ENCODE measurements at regions of chr6 and their contacts with region 1.

Region 1: GRCh38 chr6:152124429-152125074 is 317.1 kb downstream of the ESR1 start:
- DNase-seq: no peak
- H3K4me3 ChIP-seq: no peak overlapping the region
- H3K27ac ChIP-seq: no peak overlapping the region
- H3K4me1 ChIP-seq: no peaks in the 10 kb centered on the region
- H3K27me3 ChIP-seq: no peaks in the 10 kb centered on the region
- CTCF ChIP-seq: peak in 2 of 3 experiments; percentile 38 to 59; a peak in 2 of 4 replicates
- EP300 ChIP-seq: no peak
- POLR2A ChIP-seq: no peak
- RAD21 ChIP-seq: peak; percentile 73 to 81

Region 2: DNA sequence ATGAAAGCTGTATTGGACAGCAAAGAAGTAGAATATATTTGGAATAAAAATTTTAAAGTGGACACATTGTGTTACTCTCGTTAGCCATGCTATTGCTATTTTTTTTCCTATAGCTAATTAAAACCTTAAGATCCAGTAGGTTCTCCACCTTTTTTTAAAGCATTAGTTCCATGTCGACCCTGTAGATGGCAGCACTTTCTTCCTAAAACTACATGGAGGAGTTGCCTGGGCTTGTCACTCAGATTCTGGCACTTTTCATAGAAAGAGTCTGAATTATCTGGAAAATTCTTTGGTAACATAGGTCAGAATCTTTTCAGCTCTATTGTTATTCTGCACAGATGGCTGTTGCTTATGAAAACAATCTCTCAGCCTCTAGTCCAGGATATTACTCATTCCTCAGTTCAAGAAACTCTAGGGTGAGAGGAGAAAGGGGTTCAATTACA is 359.1 kb before region 1 on chr6:
- CTCF ChIA-PET with region 1: interaction called, 31 read pairs
- POLR2A ChIA-PET with region 1: no interaction called
- DNase-seq: no peak
- H3K4me3 ChIP-seq: no peak overlapping the region
- H3K27ac ChIP-seq: no peak overlapping the region
- H3K4me1 ChIP-seq: peaks cover 0 to 9% (median 2%) of the 10 kb centered on the region in 4 experiments; a peak in 3 of 7 replicates
- H3K27me3 ChIP-seq: peaks cover 0 to 1% (median 0%) of the 10 kb centered on the region in 4 experiments; a peak in 1 of 7 replicates
- CTCF ChIP-seq: peak in 2 of 3 experiments; percentile 58 to 62; a peak in 3 of 4 replicates
- EP300 ChIP-seq: no peak
- POLR2A ChIP-seq: no peak
- RAD21 ChIP-seq: peak; percentile 79

Region 3: GRCh38 chr6:151822260-151823111 is 302.1 kb before region 1 on chr6:
- CTCF ChIA-PET with region 1: no interaction called
- POLR2A ChIA-PET with region 1: no interaction called
- DNase-seq: no peak
- H3K4me3 ChIP-seq: no peak overlapping the region
- H3K27ac ChIP-seq: no peak overlapping the region
- H3K4me1 ChIP-seq: no peaks in the 10 kb centered on the region
- H3K27me3 ChIP-seq: no peaks in the 10 kb centered on the region
- CTCF ChIP-seq: no peak
- EP300 ChIP-seq: no peak
- POLR2A ChIP-seq: no peak
- RAD21 ChIP-seq: no peak

Region 4: GRCh38 chr6:152100183-152100618 is 24.4 kb before region 1 on chr6:
- CTCF ChIA-PET with region 1: interaction called, 29 read pairs
- POLR2A ChIA-PET with region 1: no interaction called
- DNase-seq: no peak
- H3K4me3 ChIP-seq: no peak overlapping the region
- H3K27ac ChIP-seq: no peak overlapping the region
- H3K4me1 ChIP-seq: peaks cover 0 to 3% (median 0%) of the 10 kb centered on the region in 4 experiments; a peak in 1 of 7 replicates
- H3K27me3 ChIP-seq: no peaks in the 10 kb centered on the region
- CTCF ChIP-seq: no peak
- EP300 ChIP-seq: no peak
- POLR2A ChIP-seq: no peak
- RAD21 ChIP-seq: no peak

Region 5: DNA sequence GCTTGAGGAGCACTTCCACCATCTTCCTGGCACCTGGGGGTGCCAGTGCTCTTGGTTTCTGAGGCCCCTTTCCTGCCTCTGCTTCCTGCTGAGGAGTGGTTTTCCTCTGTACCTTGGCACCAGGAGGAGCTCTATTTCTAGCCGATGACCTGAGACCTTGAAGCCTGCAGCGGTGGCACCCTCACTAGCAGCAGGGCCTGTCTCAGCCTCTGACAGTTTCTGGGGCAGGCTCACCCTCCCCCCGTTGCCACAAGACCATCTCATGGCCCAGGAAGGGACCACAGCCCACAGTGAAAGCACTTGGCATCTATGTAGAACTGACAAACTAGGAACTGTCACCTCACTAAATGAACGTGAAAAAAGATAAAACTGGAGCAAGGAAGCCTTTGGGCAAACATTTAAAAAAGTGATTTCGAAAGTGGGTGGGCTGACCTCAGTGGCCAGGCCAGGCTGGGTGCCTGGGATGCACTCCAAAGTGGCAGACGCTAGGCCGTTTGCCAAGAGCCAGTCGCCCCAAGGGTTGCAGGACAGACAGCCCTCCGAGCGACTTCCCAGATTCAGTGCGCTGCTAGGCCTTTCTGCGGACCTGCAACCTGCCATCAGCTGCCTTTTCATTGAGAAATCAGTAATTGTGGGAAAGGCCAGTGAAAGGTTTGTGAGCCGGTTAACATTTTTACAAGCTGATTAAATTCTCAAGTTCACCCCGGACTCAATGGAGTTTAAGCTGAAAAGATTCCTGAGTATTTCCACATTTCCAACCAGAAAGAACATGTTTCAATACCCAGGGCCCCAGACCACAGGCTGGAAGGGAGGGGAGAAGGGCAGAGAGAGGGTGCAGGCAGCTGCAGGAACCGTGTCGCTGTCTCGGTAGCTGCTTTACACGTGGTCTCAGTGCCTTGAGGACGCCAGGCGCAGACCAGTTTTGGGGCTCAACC is 13.4 kb before region 1 on chr6:
- CTCF ChIA-PET with region 1: interaction called, 12 read pairs
- POLR2A ChIA-PET with region 1: no interaction called
- DNase-seq: no peak
- H3K4me3 ChIP-seq: no peak overlapping the region
- H3K27ac ChIP-seq: no peak overlapping the region
- H3K4me1 ChIP-seq: no peaks in the 10 kb centered on the region
- H3K27me3 ChIP-seq: no peaks in the 10 kb centered on the region
- CTCF ChIP-seq: no peak
- EP300 ChIP-seq: no peak
- POLR2A ChIP-seq: no peak
- RAD21 ChIP-seq: 0 out of 4 replicates have a peak, but pooled peaks of 1 of the 2 experiments have one; percentile 2

Measured in H1 (cell line).